Activated CD4-positive, alpha-beta T cell treated with anti-CD3 and anti-CD28 coated beads, Interleukin-2, amount 10 ng/mL, durations not matched to agents 24 days and 14 days (primary cell): ENCODE measurements at regions of chr18 and their contacts with region 1.

Region 1: DNA sequence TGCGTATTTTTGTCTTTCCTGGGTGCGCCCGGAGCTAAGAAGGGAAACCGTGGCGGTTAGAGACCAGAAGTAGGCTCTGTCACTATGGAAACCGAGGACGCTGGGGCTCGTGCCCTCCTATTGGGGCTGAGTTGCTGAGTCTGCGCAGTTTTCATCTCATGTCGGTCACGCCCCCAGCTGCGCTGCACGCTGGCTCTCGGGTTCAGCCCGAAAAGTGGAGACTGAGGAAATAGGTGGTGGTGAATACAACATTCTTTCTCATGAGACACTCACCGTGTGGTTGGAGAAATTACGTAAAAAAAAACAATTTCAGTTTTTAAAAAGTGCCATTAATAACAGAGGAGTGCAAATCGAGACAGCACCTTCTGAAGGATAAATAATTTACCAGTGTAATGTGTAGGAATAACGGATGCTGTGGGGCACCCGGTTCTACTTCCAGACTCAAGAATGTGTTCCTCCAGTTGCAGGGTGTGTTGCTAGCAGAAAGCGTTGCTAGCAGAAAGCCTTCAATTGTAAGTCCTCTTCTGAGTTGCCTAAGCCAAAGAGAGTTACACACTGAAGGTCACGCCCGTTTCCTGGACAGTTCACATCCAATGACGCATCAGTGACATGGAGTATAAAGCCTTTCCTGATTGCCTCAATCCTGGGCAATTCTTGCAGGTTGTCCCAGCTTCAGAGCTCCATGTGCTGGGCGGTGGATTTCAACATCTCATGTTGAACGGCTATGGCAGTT is 20.4 kb upstream of the CXXC1 start:
- DNase-seq: peak; percentile 97
- H3K4me3 Mint-ChIP-seq: peak overlapping the region; percentile 95
- H3K27ac Mint-ChIP-seq: peak overlapping the region; percentile 86
- H3K4me1 Mint-ChIP-seq: peaks cover 13% of the 10 kb centered on the region
- H3K27me3 Mint-ChIP-seq: peaks cover 25% of the 10 kb centered on the region

Region 2: DNA sequence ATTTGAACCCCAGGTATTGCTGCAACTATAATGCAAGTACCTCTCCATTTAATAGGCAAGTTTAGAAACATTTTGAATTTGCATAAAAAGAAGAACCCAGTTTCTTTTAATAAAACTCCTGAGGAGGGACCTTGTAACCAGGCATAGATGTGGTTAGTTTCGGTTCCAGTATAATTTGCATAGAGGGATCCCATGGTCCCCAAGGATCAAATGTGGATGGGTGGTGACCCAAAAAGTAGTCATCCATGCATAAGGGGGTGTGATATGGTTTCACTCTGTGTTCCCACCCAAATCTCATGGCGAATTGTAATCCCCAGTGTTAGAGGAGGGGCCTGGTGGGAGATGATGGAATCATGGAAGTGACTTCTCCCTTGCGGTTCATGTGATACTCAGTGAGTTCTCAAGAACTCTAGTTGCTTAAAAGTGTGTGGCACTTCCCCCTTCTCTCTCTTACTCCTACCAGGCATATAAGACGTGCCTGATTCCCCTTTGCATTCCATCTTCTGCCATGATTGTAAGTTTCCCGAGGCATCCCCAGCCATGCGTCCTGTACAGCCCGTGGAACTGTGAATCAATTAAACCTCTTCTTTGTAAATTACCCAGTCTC is 26.7 kb after region 1 on chr18:
- intact Hi-C with region 1: no loop called
- DNase-seq: no peak
- H3K4me3 Mint-ChIP-seq: no peak overlapping the region
- H3K27ac Mint-ChIP-seq: no peak overlapping the region
- H3K4me1 Mint-ChIP-seq: no peaks in the 10 kb centered on the region
- H3K27me3 Mint-ChIP-seq: peaks cover 12% of the 10 kb centered on the region

Region 3: GRCh38 chr18:50374753-50375391 is 67.0 kb after region 1 on chr18 and contains the start of gene SKA1:
- intact Hi-C with region 1: loop called (anchors 2 kb)
- DNase-seq: peak; percentile 98
- H3K4me3 Mint-ChIP-seq: peak within 1 kb of the TSS; percentile 90
- H3K27ac Mint-ChIP-seq: peak within 1 kb of the TSS; percentile 89
- H3K4me1 Mint-ChIP-seq: peaks cover 15% of the 10 kb centered on the region
- H3K27me3 Mint-ChIP-seq: peaks cover 6% of the 10 kb centered on the region
- total RNA-seq, gene SKA1: 20.0 and 22.1 TPM in 2 replicates